Panc1 (cell line): ENCODE measurements at regions of chr2 and their contacts with region 1.

Region 1: GRCh38 chr2:183078465-183079138 is at the start of gene DUSP19:
- DNase-seq: peak; percentile 93
- ATAC-seq: peak; percentile 96
- H3K4me3 ChIP-seq: peak within 1 kb of the TSS; percentile 95
- H3K27ac ChIP-seq: peak within 1 kb of the TSS; percentile 92
- H3K4me1 ChIP-seq: peaks cover 5% of the 10 kb centered on the region; the same call in 1 of the 2 replicates
- H3K27me3 ChIP-seq: no peaks in the 10 kb centered on the region; the same call in 1 of the 2 replicates
- CTCF ChIP-seq: no peak
- total RNA-seq, gene DUSP19: 1.3 TPM

Region 2: GRCh38 chr2:183035954-183036669 is 42.5 kb before region 1 on chr2:
- CTCF ChIA-PET with region 1: no interaction called
- POLR2A ChIA-PET with region 1: interaction called, 12 read pairs
- in situ Hi-C with region 1: no loop called
- intact Hi-C with region 1: no loop called
- DNase-seq: no peak
- ATAC-seq: no peak
- H3K4me3 ChIP-seq: peak overlapping the region; percentile 90 to 94
- H3K27ac ChIP-seq: peak overlapping the region; percentile 93
- H3K4me1 ChIP-seq: peaks cover 40% of the 10 kb centered on the region
- H3K27me3 ChIP-seq: no peaks in the 10 kb centered on the region; the same call in 1 of the 2 replicates
- CTCF ChIP-seq: no peak

Region 3: GRCh38 chr2:183371545-183371944 is 292.9 kb after region 1 on chr2:
- CTCF ChIA-PET with region 1: no interaction called
- POLR2A ChIA-PET with region 1: no interaction called
- in situ Hi-C with region 1: no loop called
- intact Hi-C with region 1: no loop called
- DNase-seq: no peak
- ATAC-seq: no peak
- H3K4me3 ChIP-seq: no peak overlapping the region
- H3K27ac ChIP-seq: no peak overlapping the region
- H3K4me1 ChIP-seq: no peaks in the 10 kb centered on the region
- H3K27me3 ChIP-seq: no peaks in the 10 kb centered on the region
- CTCF ChIP-seq: no peak

Region 4: DNA sequence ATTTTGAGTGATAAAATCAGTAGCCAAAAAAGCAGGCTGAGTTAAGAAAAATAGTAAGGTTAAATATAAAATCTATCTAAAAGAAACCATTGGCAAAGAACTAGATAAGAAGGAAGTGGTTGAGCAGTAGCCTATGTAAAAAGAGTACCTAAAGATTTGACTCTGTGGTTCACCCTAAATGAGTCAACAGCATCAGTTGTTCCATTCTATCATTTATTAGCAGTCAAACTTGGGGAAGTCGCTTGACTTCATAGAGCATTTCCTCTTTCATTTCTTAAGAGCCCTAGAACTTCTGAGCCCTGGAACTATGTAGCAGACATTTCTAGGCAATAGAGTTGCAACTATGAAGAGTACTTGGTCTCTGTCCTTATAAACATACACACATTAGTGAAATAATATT is 427.3 kb after region 1 on chr2:
- CTCF ChIA-PET with region 1: no interaction called
- POLR2A ChIA-PET with region 1: no interaction called
- in situ Hi-C with region 1: no loop called
- intact Hi-C with region 1: no loop called
- DNase-seq: no peak
- ATAC-seq: no peak
- H3K4me3 ChIP-seq: no peak overlapping the region
- H3K27ac ChIP-seq: no peak overlapping the region
- H3K4me1 ChIP-seq: no peaks in the 10 kb centered on the region
- H3K27me3 ChIP-seq: no peaks in the 10 kb centered on the region
- CTCF ChIP-seq: no peak